Cardiac septum (tissue), 1 donor: ENCODE measurements at regions of chr13 and their contacts with region 1.

Region 1: GRCh38 chr13:19959831-19960652 is 1.5 kb downstream of the ZMYM2 start:
- DNase-seq: peak; percentile 92

Region 2: GRCh38 chr13:19782049-19782726 is 177.9 kb before region 1 on chr13:
- intact Hi-C with region 1: loop called (anchors 2 kb)
- DNase-seq: peak; percentile 78

Region 3: DNA sequence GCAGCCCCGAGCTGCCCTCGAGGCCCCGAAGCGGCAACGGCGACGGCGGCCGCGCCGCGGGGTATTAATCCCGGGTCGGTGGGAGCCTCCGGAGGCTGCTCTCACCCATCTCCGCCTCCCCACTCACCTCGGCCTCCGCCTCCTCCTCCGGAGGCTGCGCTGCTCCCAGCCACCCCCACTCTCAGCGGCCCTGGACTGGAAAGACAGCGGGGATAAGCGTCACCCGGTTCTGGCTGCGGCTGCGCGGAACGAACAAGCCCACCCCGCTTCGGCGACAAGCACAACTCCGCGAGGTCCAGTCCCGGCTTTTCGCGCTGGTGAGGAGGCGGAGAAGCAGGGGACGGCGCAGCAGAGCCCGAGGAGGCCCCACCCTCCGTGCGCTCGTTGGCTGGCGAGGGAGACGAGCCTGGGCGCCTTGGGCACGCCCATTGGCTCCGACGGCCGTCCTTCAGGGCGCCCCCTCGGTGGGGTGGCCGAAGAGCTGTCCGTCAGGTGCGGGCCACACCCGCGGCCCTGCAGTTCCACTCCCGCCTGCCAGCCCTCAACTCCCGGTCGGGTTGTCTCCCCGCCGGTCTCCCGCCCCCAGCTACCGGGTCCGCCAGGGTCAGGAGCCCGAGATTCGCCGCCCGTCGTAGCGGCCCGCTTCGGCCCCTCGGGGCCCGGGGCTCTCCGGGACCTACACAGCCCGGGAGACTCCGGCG is 96.6 kb before region 1 on chr13 and contains the start of gene ZMYM5:
- intact Hi-C with region 1: loop called (anchors 2 kb)
- DNase-seq: peak; percentile 99
- total RNA-seq, gene ZMYM5: 8.3 TPM

Region 4: GRCh38 chr13:19888799-19889198 is 71.2 kb before region 1 on chr13:
- intact Hi-C with region 1: no loop called
- DNase-seq: no peak